Caco-2 (cell line): ENCODE measurements at regions of chr6 and their contacts with region 1.

Region 1: GRCh38 chr6:85323435-85324040 is 126.3 kb upstream of the NT5E start:
- DNase-seq: peak; percentile 79 to 82
- H3K4me3 ChIP-seq: no peak overlapping the region
- H3K4me3 Mint-ChIP-seq: no peak overlapping the region
- H3K27ac Mint-ChIP-seq: no peak overlapping the region
- H3K4me1 ChIP-seq: no peaks in the 10 kb centered on the region
- H3K4me1 Mint-ChIP-seq: no peaks in the 10 kb centered on the region
- H3K27me3 ChIP-seq: no peaks in the 10 kb centered on the region
- H3K27me3 Mint-ChIP-seq: peaks cover 6% of the 10 kb centered on the region
- CTCF ChIP-seq: peak; percentile 84 to 87

Region 2: GRCh38 chr6:84227434-84228197 is 1095.9 kb before region 1 on chr6 and contains the start of gene CEP162:
- CTCF ChIA-PET with region 1: interaction called, 3 read pairs
- POLR2A ChIA-PET with region 1: no interaction called
- intact Hi-C with region 1: loop called (anchors 1 kb)
- DNase-seq: peak; percentile 85 to 88
- H3K4me3 ChIP-seq: peak within 1 kb of the TSS; percentile 50
- H3K4me3 Mint-ChIP-seq: peak within 1 kb of the TSS; percentile 86
- H3K27ac Mint-ChIP-seq: peak within 1 kb of the TSS; percentile 64
- H3K4me1 ChIP-seq: 0 out of 2 replicates have a peak, but pooled peaks cover 4% of the 10 kb centered on the region
- H3K4me1 Mint-ChIP-seq: peaks cover 6% of the 10 kb centered on the region
- H3K27me3 ChIP-seq: no peaks in the 10 kb centered on the region
- H3K27me3 Mint-ChIP-seq: no peaks in the 10 kb centered on the region
- CTCF ChIP-seq: peak; percentile 57 to 62
- total RNA-seq, gene CEP162: 6.8 and 7.3 TPM in 2 replicates

Region 3: DNA sequence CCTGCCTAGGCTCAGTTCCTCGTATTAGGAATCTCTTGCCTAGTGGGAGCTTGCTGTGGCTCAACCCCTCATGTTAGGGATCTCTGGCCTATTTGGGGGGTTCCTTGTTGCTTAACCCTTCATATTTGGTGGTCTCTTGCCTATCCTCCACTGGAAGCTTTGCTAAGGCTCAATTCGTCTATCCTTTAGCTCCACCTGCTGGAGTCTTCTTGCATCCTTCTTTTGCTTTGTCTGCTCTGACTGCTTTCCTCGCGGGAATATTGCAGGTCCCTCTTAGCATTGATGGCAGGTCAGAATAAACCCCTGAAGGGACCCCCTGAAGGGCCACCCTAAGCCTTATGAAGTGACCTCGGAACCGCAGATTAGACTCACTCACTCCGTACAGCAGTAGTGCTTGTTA is 356.1 kb before region 1 on chr6:
- CTCF ChIA-PET with region 1: no interaction called
- POLR2A ChIA-PET with region 1: no interaction called
- intact Hi-C with region 1: loop called (anchors 5 kb)
- DNase-seq: peak in 1 of 2 experiments; percentile 19
- H3K4me3 ChIP-seq: no peak overlapping the region
- H3K4me3 Mint-ChIP-seq: no peak overlapping the region
- H3K27ac Mint-ChIP-seq: no peak overlapping the region
- H3K4me1 ChIP-seq: no peaks in the 10 kb centered on the region
- H3K4me1 Mint-ChIP-seq: no peaks in the 10 kb centered on the region
- H3K27me3 ChIP-seq: no peaks in the 10 kb centered on the region
- H3K27me3 Mint-ChIP-seq: peaks cover 5% of the 10 kb centered on the region
- CTCF ChIP-seq: peak; percentile 36 to 38

Region 4: GRCh38 chr6:85015396-85015990 is 308.0 kb before region 1 on chr6:
- CTCF ChIA-PET with region 1: no interaction called
- POLR2A ChIA-PET with region 1: no interaction called
- intact Hi-C with region 1: loop called (anchors 1 kb)
- DNase-seq: peak; percentile 57 to 61
- H3K4me3 ChIP-seq: no peak overlapping the region
- H3K4me3 Mint-ChIP-seq: no peak overlapping the region
- H3K27ac Mint-ChIP-seq: no peak overlapping the region
- H3K4me1 ChIP-seq: no peaks in the 10 kb centered on the region
- H3K4me1 Mint-ChIP-seq: no peaks in the 10 kb centered on the region
- H3K27me3 ChIP-seq: no peaks in the 10 kb centered on the region; the same call in 1 of the 2 replicates
- H3K27me3 Mint-ChIP-seq: peaks cover 18% of the 10 kb centered on the region
- CTCF ChIP-seq: peak; percentile 65 to 82

Region 5: DNA sequence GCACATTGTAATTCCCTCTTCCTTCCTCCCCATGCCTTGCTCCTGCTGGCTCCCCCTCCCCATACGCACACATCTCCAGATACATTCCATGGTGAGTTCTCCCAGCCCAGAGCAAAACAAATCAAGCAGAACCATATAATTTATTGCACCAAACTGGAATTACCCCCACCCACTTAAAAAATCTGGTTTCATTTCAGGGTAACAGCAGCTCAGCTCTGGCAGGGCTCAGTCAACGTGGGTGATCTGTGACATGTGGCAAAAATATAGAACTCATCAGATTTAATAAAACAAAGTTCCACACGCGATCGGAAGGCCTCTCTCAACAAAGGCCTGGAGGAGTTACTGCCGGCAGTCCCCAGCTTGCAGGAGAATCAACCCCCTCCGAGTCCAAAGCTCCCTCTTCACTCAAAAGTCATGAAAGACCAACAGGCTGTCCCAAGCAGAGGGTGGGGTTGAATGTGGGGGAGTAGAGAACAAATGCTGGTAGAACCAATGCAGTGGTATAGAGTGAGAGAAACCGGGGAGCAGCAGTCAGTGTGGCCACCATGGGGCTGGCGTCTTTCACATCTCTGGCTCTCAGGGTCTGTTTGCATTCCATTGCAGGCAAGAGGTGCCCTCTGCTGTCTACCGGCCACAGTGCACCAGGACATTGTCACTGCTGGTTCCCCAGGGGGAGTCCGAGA is 196.9 kb before region 1 on chr6:
- CTCF ChIA-PET with region 1: no interaction called
- POLR2A ChIA-PET with region 1: no interaction called
- intact Hi-C with region 1: loop called (anchors 1 kb)
- DNase-seq: peak; percentile 60 to 63
- H3K4me3 ChIP-seq: no peak overlapping the region
- H3K4me3 Mint-ChIP-seq: no peak overlapping the region
- H3K27ac Mint-ChIP-seq: no peak overlapping the region
- H3K4me1 ChIP-seq: no peaks in the 10 kb centered on the region
- H3K4me1 Mint-ChIP-seq: no peaks in the 10 kb centered on the region
- H3K27me3 ChIP-seq: no peaks in the 10 kb centered on the region
- H3K27me3 Mint-ChIP-seq: peaks cover 10% of the 10 kb centered on the region
- CTCF ChIP-seq: peak; percentile 57 to 77

Region 6: GRCh38 chr6:85551264-85551663 is 227.7 kb after region 1 on chr6:
- CTCF ChIA-PET with region 1: no interaction called
- POLR2A ChIA-PET with region 1: no interaction called
- intact Hi-C with region 1: no loop called
- DNase-seq: peak; percentile 38 to 57
- H3K4me3 ChIP-seq: no peak overlapping the region
- H3K4me3 Mint-ChIP-seq: no peak overlapping the region
- H3K27ac Mint-ChIP-seq: no peak overlapping the region
- H3K4me1 ChIP-seq: peaks cover 4% of the 10 kb centered on the region; the same call in 1 of the 2 replicates
- H3K4me1 Mint-ChIP-seq: no peaks in the 10 kb centered on the region
- H3K27me3 ChIP-seq: no peaks in the 10 kb centered on the region
- H3K27me3 Mint-ChIP-seq: no peaks in the 10 kb centered on the region
- CTCF ChIP-seq: no peak